Posterior cingulate gyrus (tissue), 11 donors: ENCODE measurements at regions of chr10 and their contacts with region 1.

Region 1: GRCh38 chr10:121886997-121887622 is 40.7 kb downstream of the ATE1 start:
- DNase-seq: peak; percentile 25 to 95 (median 71)

Region 2: DNA sequence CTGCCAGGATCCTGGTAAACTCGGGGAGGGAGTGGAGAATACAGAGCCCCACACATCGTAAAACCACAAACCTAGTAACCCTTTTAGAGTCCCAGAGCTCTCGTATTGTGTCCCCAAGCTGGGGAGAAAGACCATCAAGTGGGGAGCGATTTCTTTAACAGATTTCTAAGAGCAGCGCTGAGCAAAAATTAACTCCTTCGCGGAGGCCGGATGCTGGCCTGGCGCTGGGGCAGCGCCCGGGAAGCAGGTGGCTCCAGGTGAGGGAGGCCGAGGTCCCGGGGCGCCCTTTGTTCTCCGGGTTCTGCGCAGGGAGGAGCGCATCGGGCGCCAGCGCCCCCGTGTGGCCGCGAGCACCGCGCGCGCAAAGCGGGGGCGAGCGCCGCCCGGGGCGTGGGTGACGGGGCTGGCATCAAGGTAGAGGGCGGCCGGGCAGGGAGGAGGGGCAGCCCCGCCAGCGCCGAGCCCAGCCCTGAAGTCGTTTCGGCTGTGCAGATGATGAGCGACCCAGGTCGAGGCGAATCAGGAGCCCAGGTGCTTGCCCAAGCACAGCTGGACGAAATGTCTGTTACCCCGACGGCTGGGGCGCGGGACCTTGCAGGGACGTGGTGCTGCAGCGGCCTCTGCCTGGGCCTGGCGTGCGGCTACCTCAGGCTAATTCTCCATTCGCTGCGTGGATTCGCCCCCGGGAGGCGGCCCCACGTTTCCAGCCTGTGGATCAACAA is 278.5 kb before region 1 on chr10:
- intact Hi-C with region 1: loop called (anchors 10 kb)
- DNase-seq: peak in 8 of 10 donors; percentile 17 to 93 (median 66)

Region 3: GRCh38 chr10:121831777-121832176 is 55.3 kb before region 1 on chr10:
- intact Hi-C with region 1: no loop called
- DNase-seq: no peak

Region 4: DNA sequence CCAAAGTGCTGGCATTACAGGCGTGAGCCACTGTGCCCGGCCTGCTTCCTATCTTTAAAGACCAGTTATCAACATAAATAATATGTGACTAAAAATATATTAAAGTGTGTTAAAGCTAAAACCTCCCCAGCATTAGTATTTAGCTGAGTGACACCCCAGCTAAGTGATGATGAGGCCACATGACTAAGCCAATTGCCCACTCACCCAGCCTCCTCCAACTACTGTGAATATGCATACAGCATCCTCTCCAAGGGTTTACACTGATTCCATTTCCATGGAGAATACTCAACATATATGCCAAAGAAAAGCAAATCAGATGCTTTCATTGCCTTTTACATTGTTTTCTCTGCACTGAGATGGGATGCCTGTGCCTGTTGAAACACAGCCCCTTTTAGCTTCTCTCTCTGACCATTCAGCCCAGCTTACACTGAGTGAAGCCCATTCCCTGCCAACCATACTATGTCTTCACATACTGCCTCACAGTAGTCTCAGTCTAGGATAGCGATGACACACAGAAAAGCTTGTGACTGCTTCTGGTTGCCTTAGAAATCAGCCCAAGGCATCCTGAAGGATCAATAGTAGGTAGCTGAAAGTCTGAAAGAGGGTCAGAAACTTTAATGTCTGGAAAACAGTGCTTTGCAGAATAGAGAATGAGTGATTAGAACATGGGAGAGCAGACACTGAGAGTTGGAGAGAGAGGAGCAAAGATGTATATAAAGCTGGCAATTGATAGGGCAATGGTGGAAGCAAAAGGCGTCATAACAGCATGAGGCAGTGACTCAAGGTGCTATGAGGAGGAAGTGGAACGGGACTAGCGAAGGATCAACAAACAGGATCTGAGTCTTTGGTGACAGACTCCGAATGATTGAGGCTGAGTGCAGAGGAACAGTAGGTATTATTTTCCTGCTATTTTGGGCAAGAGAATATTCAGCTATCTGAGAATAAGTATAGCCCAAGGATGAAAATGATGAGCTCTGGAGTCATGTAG is 60.5 kb after region 1 on chr10:
- intact Hi-C with region 1: no loop called
- DNase-seq: no peak